ENCODE measurements at regions of chr17 and their contacts with region 1.

Region 1: DNA sequence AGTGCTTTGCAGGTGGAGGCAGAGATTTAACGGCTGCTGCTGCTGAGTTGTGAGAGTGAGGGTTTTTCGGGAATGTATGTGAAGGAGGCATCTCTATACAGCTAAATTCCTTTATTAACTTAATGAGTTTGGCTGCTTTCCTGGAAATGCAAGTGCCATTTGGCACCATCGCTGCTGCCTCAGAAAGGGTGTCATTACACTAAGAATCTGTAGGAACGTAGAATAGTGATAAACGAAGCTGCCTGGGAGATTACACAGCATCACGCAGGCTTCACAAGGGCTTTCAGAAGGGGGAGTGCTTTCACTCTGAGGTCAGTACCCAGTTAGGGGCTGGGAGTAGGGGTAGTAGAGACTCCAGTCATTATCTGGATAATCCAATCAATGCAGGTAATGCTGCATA is 14.1 kb upstream of the NLRP1 start:
- DNase-seq: no peak
- ATAC-seq: no peak
- H3K4me3 ChIP-seq: no peak overlapping the region
- H3K27ac ChIP-seq: no peak overlapping the region
- H3K4me1 ChIP-seq: no peaks in the 10 kb centered on the region
- H3K27me3 ChIP-seq: peaks cover 0 to 42% (median 22%) of the 10 kb centered on the region in 3 donors
- CTCF ChIP-seq: no peak
- POLR2A ChIP-seq: no peak

Region 2: GRCh38 chr17:5571281-5571680 is 27.2 kb before region 1 on chr17:
- in situ Hi-C with region 1: no loop called
- intact Hi-C with region 1: no loop called
- DNase-seq: no peak
- ATAC-seq: no peak
- H3K4me3 ChIP-seq: no peak overlapping the region
- H3K27ac ChIP-seq: no peak overlapping the region
- H3K4me1 ChIP-seq: no peaks in the 10 kb centered on the region
- H3K27me3 ChIP-seq: no peaks in the 10 kb centered on the region
- CTCF ChIP-seq: no peak
- POLR2A ChIP-seq: no peak

Region 3: GRCh38 chr17:5715478-5715877 is 117.0 kb after region 1 on chr17:
- in situ Hi-C with region 1: loop called in 2 of 4 experiments (anchors 5 to 25 kb)
- intact Hi-C with region 1: no loop called
- DNase-seq: no peak
- ATAC-seq: no peak
- H3K4me3 ChIP-seq: no peak overlapping the region
- H3K27ac ChIP-seq: no peak overlapping the region
- H3K4me1 ChIP-seq: peaks cover 5 to 16% of the 10 kb centered on the region in 2 donors
- H3K27me3 ChIP-seq: peaks cover 4 to 54% (median 8%) of the 10 kb centered on the region in 3 donors
- CTCF ChIP-seq: no peak
- POLR2A ChIP-seq: no peak

Measured in gastrocnemius medialis (tissue), 4 donors.